ENCODE measurements at regions of chr2 and their contacts with region 1.

Region 1: GRCh38 chr2:164430166-164430783 is 191.0 kb downstream of the GRB14 start:
- DNase-seq: peak in 1 of 2 donors; percentile 11
- ATAC-seq: no peak
- H3K4me3 ChIP-seq: no peak overlapping the region
- H3K27ac ChIP-seq: no peak overlapping the region
- H3K4me1 ChIP-seq: no peaks in the 10 kb centered on the region
- H3K27me3 ChIP-seq: peaks cover 0 to 14% (median 0%) of the 10 kb centered on the region in 7 donors
- CTCF ChIP-seq: peak in 7 of 9 donors; percentile 55 to 73 (median 63)

Region 2: DNA sequence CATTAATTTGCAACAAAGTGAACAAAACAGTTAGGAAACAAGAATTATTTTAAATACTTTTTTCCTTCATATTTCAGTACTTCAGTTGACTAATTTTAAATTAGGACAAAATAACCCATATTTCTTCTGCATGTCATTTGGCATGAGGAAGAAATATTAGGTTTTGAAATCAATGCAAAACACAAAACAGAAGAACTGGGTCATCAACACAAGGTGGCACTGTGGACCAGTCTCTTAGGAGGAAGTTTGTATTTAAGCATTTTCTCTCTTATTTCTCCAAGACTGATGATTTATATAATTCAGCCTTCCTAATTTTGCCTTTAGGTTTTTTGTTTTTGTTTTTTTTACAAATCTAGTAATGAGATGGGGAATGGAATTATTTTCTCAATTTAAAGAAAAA is 1238.9 kb before region 1 on chr2:
- intact Hi-C with region 1: loop called in 7 of 10 experiments (anchors 5 to 10 kb)
- DNase-seq: no peak
- ATAC-seq: no peak
- H3K4me3 ChIP-seq: no peak overlapping the region
- H3K27ac ChIP-seq: no peak overlapping the region
- H3K4me1 ChIP-seq: no peaks in the 10 kb centered on the region
- H3K27me3 ChIP-seq: no peaks in the 10 kb centered on the region
- CTCF ChIP-seq: peak; percentile 23 to 71 (median 59)

Region 3: GRCh38 chr2:164388511-164388910 is 41.8 kb before region 1 on chr2:
- intact Hi-C with region 1: no loop called
- DNase-seq: no peak
- ATAC-seq: no peak
- H3K4me3 ChIP-seq: no peak overlapping the region
- H3K27ac ChIP-seq: no peak overlapping the region
- H3K4me1 ChIP-seq: no peaks in the 10 kb centered on the region
- H3K27me3 ChIP-seq: no peaks in the 10 kb centered on the region
- CTCF ChIP-seq: no peak